ENCODE measurements at regions of chr9 and their contacts with region 1.

Region 1: DNA sequence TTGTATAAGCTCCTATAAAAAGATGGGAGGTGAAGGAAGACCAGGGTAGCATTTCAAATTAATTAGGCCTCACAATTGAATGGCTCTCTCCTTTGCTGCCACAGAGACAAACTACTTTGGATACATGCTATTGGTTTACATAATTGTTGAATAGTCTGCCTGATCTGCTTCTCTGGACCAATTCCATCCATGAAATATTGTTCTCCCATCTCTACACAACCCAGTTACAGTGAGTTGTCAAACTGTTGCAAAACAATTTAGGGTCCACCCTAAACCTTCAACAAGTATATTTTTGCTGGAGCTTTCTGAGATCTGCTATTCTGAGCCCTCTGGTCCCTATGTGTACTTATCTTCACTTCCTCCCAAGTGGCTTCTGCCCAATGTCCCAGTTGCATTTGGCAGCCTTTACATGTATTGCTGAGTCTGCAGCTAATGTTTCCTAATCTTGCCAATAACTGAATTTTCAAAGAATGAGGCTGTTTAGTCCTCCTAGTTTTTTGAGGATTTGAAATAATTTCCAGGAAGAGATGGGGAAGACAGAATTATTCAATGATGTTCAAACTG is 38.9 kb downstream of the AGTPBP1 start:
- DNase-seq: no peak
- ATAC-seq: no peak
- H3K4me3 Mint-ChIP-seq: no peak overlapping the region
- H3K27ac Mint-ChIP-seq: no peak overlapping the region
- H3K4me1 Mint-ChIP-seq: no peaks in the 10 kb centered on the region; the same call in 1 of the 2 replicates
- H3K27me3 Mint-ChIP-seq: no peaks in the 10 kb centered on the region
- CTCF ChIP-seq: no peak

Region 2: GRCh38 chr9:85667374-85667773 is 35.4 kb before region 1 on chr9:
- CTCF ChIA-PET with region 1: no interaction called
- POLR2A ChIA-PET with region 1: no interaction called
- DNase-seq: no peak
- ATAC-seq: no peak
- H3K4me3 Mint-ChIP-seq: no peak overlapping the region
- H3K27ac Mint-ChIP-seq: no peak overlapping the region
- H3K4me1 Mint-ChIP-seq: no peaks in the 10 kb centered on the region
- H3K27me3 Mint-ChIP-seq: no peaks in the 10 kb centered on the region
- CTCF ChIP-seq: no peak

Region 3: GRCh38 chr9:85723215-85723614 is 20.4 kb after region 1 on chr9:
- CTCF ChIA-PET with region 1: interaction called, 32 read pairs
- POLR2A ChIA-PET with region 1: no interaction called
- DNase-seq: peak; percentile 85
- ATAC-seq: peak; percentile 91
- H3K4me3 Mint-ChIP-seq: no peak overlapping the region
- H3K27ac Mint-ChIP-seq: peak overlapping the region; percentile 94
- H3K4me1 Mint-ChIP-seq: peaks cover 40% of the 10 kb centered on the region
- H3K27me3 Mint-ChIP-seq: no peaks in the 10 kb centered on the region
- CTCF ChIP-seq: no peak

Region 4: GRCh38 chr9:85741875-85742629 is 39.2 kb after region 1 on chr9 and contains the start of gene AGTPBP1:
- CTCF ChIA-PET with region 1: interaction called, 18 read pairs
- POLR2A ChIA-PET with region 1: no interaction called
- DNase-seq: peak; percentile 96
- ATAC-seq: peak; percentile 84
- H3K4me3 Mint-ChIP-seq: peak within 1 kb of the TSS; percentile 92
- H3K27ac Mint-ChIP-seq: peak within 1 kb of the TSS; percentile 96
- H3K4me1 Mint-ChIP-seq: peaks cover 57% of the 10 kb centered on the region
- H3K27me3 Mint-ChIP-seq: no peaks in the 10 kb centered on the region; the same call in 1 of the 2 replicates
- CTCF ChIP-seq: no peak
- total RNA-seq, gene AGTPBP1: 53.6 to 54.7 TPM (median 54.4 TPM) in 3 replicates

Measured in WTC11 (cell line).